SK-N-SH (cell line): ENCODE measurements at regions of chr17 and their contacts with region 1.

Region 1: DNA sequence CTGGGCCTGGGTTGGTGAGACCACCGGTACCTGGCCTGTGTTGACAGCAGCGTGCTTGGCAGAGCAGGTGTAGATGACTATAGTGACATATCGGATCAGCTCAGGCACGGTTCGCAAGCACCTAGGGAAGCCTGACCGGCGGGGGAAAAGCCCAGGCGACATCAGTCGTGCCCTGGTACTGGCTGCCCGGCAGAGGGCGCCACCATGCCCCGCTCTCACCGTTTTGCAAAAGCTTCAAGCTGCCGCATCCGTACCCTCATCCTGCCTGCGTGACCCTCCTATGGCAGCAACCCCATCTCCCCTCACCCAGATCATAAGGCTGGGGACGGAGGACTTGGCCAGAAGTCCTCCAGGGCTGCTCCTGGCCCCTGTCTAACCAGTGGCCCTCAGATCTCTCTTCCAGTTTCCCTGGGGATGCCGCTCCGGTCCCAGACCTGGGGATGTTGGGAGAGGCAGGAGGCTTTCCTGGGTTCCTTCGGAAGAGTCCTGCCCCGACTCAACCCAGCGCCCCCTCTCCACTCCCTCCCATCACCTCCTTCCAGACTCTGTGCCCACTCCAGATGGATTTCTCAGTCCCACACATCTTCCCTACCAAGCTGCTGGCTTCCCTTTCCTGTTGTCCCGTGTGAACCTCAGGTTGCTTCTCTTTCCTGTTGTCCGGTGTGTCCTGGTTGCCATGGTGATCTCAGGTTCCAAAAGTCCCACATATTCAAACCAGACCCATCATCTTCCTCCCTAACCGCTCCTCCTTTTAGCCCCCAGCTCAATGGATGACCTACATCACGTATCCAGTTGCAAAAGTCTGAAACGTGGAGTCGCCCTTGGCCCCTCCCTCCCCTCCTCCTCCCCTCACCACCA is 13.7 kb downstream of the ALOX12B start:
- DNase-seq: peak; percentile 89
- H3K4me3 ChIP-seq: peak overlapping the region in 1 of 2 experiments; percentile 26; a peak in 1 of 4 replicates
- H3K27ac ChIP-seq: no peak overlapping the region
- H3K4me1 ChIP-seq: peaks cover 0 to 8% of the 10 kb centered on the region in 2 experiments; a peak in 1 of 4 replicates
- H3K27me3 ChIP-seq: peaks cover 64% of the 10 kb centered on the region
- CTCF ChIP-seq: peak; percentile 89
- EP300 ChIP-seq: no peak
- RAD21 ChIP-seq: peak; percentile 41

Region 2: DNA sequence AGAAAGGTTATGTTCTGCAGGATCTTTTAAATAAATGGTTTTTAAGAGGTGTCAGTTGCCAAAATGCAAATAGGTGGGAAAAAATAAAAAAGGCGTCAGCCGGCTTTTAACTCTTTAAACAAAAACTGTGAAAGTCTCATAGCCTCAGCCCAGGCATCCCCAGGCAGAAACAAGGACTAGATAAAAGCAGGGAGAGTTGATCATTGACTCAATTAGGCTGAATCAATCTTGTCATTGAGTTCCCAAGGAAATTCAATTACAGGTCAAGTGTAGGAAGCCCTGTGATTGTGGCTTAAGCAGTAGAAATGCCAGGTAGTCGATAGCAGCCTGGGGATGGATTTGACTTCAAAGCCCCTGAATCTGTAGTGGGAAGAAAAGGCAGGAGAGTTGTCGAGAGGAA is 102.2 kb before region 1 on chr17:
- CTCF ChIA-PET with region 1: no interaction called
- POLR2A ChIA-PET with region 1: no interaction called
- DNase-seq: no peak
- H3K4me3 ChIP-seq: no peak overlapping the region
- H3K27ac ChIP-seq: no peak overlapping the region
- H3K4me1 ChIP-seq: no peaks in the 10 kb centered on the region
- H3K27me3 ChIP-seq: no peaks in the 10 kb centered on the region
- CTCF ChIP-seq: no peak
- EP300 ChIP-seq: no peak
- RAD21 ChIP-seq: no peak

Region 3: GRCh38 chr17:8005960-8006730 is 67.7 kb before region 1 on chr17:
- CTCF ChIA-PET with region 1: interaction called, 10 read pairs
- POLR2A ChIA-PET with region 1: no interaction called
- DNase-seq: peak; percentile 57
- H3K4me3 ChIP-seq: no peak overlapping the region
- H3K27ac ChIP-seq: no peak overlapping the region
- H3K4me1 ChIP-seq: no peaks in the 10 kb centered on the region
- H3K27me3 ChIP-seq: 0 out of 2 replicates have a peak, but pooled peaks cover 4% of the 10 kb centered on the region
- CTCF ChIP-seq: no peak
- EP300 ChIP-seq: no peak
- RAD21 ChIP-seq: no peak

Region 4: DNA sequence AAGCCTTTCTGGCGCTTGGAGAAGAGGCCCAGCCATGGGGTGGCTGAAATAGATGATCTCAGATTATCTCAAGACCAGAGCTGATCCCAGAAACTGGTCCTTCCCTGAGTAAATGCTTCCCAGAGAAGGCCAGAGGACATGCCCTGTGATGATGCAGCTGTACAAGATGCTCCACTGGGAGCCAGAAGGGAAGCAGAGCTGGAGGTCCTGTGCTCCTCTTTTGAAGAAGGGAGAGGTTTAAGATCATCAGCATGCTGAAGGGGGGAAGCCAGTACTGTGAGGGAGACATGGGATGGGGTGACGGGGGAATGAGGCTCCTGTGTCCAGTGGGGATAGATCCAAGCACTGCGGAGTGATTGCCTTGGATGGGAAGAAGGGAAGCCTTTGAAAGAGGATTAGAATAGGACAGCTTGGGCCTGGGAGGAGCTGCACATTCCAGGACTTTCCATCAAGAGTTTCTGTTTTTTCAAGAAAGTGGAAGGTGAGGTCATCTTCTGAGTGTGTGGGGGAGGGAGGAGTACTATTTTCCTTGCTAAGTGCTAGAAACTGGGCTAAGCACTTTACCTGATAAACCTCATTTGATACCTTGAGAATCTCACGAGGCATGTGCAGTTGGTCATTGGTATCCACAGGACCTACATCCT is 51.4 kb before region 1 on chr17:
- CTCF ChIA-PET with region 1: interaction called, 23 read pairs
- POLR2A ChIA-PET with region 1: no interaction called
- DNase-seq: no peak
- H3K4me3 ChIP-seq: no peak overlapping the region
- H3K27ac ChIP-seq: no peak overlapping the region
- H3K4me1 ChIP-seq: no peaks in the 10 kb centered on the region; a peak in 1 of 4 replicates
- H3K27me3 ChIP-seq: peaks cover 6% of the 10 kb centered on the region; the same call in 1 of the 2 replicates
- CTCF ChIP-seq: no peak
- EP300 ChIP-seq: no peak
- RAD21 ChIP-seq: no peak

Region 5: DNA sequence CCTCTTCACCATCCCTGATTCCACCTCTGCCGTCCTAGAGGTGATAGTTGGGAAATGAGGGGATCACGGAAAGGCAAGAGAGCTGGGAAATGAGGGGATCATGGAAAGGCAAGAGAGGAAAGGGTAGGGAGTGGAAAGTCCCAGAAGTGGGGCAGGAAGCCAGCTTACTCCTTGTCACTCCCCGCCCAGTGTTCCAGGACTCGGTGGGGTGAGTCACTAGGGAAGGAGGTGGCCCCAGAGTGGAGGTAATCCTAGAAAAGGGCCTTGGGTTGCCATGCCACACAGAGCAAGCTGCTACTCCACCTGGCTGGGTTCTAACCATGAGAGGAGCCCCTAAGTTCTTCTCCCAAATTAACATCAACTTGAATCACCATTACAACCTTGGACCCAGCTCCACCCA is 29.7 kb after region 1 on chr17:
- CTCF ChIA-PET with region 1: interaction called, 39 read pairs
- POLR2A ChIA-PET with region 1: no interaction called
- DNase-seq: no peak
- H3K4me3 ChIP-seq: no peak overlapping the region
- H3K27ac ChIP-seq: no peak overlapping the region
- H3K4me1 ChIP-seq: no peaks in the 10 kb centered on the region
- H3K27me3 ChIP-seq: no peaks in the 10 kb centered on the region
- CTCF ChIP-seq: no peak
- EP300 ChIP-seq: no peak
- RAD21 ChIP-seq: no peak

Region 6: DNA sequence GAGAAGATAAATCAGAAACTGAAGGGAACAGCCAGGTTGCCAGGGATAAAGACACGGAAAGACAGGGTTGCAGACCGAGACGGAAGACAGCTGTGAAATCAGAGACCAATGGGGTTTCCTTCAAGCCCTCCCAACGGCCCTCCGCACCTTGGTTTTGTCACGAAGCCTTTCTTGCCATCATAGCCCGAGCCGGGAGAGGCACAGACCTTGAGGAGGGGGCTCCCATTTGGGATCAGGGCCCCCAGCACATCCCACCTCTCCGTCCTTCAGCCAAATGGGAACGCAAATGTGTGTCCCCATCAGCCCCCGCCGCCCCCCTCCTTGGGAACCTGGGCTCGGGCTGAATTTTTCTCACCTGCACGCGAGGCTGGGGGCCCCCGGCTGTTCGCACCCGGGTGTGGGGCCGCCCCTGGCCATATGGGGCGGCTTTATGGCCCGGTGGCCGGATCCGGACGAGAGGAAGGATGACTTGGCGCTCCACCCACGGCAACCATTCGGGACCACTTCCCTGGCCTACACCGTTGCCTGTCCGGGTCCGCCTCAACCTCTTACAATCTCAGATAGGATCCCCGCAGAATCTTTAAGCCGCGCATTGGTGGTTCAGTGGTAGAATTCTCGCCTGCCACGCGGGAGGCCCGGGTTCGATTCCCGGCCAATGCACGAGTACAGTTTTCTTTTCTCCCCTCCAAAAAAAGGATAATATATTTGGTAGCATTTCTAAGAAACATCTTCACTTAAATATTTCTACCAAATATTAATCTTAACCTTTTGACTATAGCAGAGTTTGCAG is 51.5 kb after region 1 on chr17:
- CTCF ChIA-PET with region 1: interaction called, 75 read pairs
- POLR2A ChIA-PET with region 1: no interaction called
- DNase-seq: peak; percentile 88
- H3K4me3 ChIP-seq: peak overlapping the region; percentile 53 to 81
- H3K27ac ChIP-seq: peak overlapping the region; percentile 17 to 54; a peak in 2 of 4 replicates
- H3K4me1 ChIP-seq: peaks cover 0 to 32% of the 10 kb centered on the region in 2 experiments; a peak in 1 of 4 replicates
- H3K27me3 ChIP-seq: no peaks in the 10 kb centered on the region; the same call in 1 of the 2 replicates
- CTCF ChIP-seq: no peak
- EP300 ChIP-seq: no peak
- RAD21 ChIP-seq: no peak